ENCODE measurements at regions of chr12 and their contacts with region 1.

Region 1: GRCh38 chr12:47904713-47905310 is at the start of gene VDR:
- DNase-seq: peak; percentile 81
- H3K4me3 Mint-ChIP-seq: peak within 1 kb of the TSS; percentile 96
- H3K27ac Mint-ChIP-seq: peak within 1 kb of the TSS; percentile 81
- H3K4me1 Mint-ChIP-seq: peaks cover 44% of the 10 kb centered on the region
- H3K27me3 Mint-ChIP-seq: peaks cover 38% of the 10 kb centered on the region
- total RNA-seq, gene VDR: 62.9 to 65.5 TPM

Region 2: DNA sequence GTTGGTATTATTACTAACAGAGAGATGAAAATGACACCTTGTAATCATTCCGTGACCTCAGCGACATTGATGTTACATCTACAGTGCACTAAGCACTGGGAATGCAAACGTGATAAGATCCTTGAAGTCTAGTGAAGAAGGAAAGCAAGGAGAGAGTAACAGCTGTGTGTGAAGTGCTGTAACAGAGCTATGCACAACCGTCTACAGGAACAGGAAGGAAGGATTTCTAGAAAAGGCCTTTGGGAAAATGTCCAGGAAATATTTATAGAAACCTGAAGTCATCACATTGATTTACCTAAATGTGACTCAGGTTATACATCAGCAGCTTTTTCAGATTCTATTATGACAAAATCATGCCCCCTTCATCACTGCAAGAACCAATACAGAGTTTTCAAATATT is 520.9 kb before region 1 on chr12:
- CTCF ChIA-PET with region 1: no interaction called
- POLR2A ChIA-PET with region 1: no interaction called
- DNase-seq: no peak
- H3K4me3 Mint-ChIP-seq: no peak overlapping the region
- H3K27ac Mint-ChIP-seq: no peak overlapping the region
- H3K4me1 Mint-ChIP-seq: peaks cover 41% of the 10 kb centered on the region
- H3K27me3 Mint-ChIP-seq: no peaks in the 10 kb centered on the region

Region 3: GRCh38 chr12:47882781-47883546 is 21.8 kb before region 1 on chr12:
- CTCF ChIA-PET with region 1: interaction called, 11 read pairs
- POLR2A ChIA-PET with region 1: interaction called, 205 read pairs
- DNase-seq: peak; percentile 59
- H3K4me3 Mint-ChIP-seq: peak overlapping the region; percentile 80
- H3K27ac Mint-ChIP-seq: peak overlapping the region; percentile 98
- H3K4me1 Mint-ChIP-seq: peaks cover 83% of the 10 kb centered on the region
- H3K27me3 Mint-ChIP-seq: no peaks in the 10 kb centered on the region

Region 4: DNA sequence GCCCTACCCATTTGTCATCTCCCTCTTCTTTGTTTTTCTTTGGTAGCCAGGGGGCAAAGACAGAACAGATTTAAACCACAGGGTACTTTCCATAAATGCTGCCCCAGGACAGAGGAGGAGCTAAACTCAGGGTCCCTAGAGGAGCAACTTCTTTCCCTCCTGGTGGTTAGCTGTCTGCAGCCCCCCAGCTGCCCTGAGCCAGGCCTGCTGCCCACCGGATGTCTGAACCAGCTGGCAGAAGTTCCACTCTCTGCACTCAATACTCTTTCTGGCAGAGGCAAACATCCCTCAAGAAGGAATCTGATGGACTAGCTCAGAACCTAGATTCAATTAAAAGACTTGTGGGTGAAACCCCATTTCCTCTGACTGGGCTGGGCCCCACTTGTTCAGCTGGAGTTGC is 10.7 kb before region 1 on chr12:
- CTCF ChIA-PET with region 1: interaction called, 18 read pairs
- POLR2A ChIA-PET with region 1: interaction called, 205 read pairs
- DNase-seq: no peak
- H3K4me3 Mint-ChIP-seq: no peak overlapping the region
- H3K27ac Mint-ChIP-seq: peak overlapping the region; percentile 95
- H3K4me1 Mint-ChIP-seq: peaks cover 95% of the 10 kb centered on the region
- H3K27me3 Mint-ChIP-seq: no peaks in the 10 kb centered on the region

Region 5: DNA sequence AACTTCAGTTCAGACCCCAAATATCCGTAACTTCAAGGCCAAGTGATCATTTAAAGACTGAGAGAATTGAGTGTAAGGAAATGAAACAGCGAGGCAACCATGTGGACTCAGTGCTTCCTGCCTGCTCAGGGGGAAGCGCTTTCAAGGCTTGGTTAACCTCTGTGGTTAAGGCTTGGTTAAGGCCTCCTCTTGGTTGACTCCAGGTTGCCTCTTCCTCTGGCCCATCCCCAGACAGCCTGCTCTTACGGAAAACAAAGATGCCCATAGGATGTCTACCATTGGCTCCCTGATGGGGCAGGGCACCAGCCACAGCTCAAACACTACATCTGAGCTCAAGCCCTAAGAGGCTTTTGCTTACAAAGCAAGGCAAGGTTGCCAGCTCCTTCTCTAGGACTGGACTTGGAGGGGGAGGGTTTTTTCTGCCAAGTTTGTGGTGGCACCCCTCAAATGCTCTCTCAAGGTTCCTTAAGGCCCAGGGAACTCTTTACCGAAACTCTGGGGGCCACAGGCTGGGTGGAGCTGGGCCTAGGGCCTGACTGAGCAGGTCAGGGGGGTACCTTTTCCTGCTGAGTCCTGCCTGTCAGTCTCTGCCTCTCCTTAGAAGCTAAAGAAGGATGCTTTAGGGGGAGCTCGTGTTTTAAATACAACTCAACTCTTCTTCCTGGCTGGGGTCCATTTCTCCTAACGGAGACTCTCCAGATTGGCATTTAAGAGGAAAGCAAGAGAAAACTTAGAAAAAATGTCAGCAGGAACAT is 85.7 kb after region 1 on chr12:
- CTCF ChIA-PET with region 1: no interaction called
- POLR2A ChIA-PET with region 1: no interaction called
- DNase-seq: peak; percentile 83
- H3K4me3 Mint-ChIP-seq: no peak overlapping the region
- H3K27ac Mint-ChIP-seq: peak overlapping the region; percentile 62
- H3K4me1 Mint-ChIP-seq: peaks cover 28% of the 10 kb centered on the region
- H3K27me3 Mint-ChIP-seq: peaks cover 69% of the 10 kb centered on the region

Measured in activated CD4-positive, alpha-beta memory T cell treated with anti-CD3 and anti-CD28 coated beads, Interleukin-2, amount 10 ng/mL, durations not matched to agents 7 days and 5 days (primary cell).